Left colon (tissue), 2 donors: ENCODE measurements at regions of chr7 and their contacts with region 1.

Region 1: DNA sequence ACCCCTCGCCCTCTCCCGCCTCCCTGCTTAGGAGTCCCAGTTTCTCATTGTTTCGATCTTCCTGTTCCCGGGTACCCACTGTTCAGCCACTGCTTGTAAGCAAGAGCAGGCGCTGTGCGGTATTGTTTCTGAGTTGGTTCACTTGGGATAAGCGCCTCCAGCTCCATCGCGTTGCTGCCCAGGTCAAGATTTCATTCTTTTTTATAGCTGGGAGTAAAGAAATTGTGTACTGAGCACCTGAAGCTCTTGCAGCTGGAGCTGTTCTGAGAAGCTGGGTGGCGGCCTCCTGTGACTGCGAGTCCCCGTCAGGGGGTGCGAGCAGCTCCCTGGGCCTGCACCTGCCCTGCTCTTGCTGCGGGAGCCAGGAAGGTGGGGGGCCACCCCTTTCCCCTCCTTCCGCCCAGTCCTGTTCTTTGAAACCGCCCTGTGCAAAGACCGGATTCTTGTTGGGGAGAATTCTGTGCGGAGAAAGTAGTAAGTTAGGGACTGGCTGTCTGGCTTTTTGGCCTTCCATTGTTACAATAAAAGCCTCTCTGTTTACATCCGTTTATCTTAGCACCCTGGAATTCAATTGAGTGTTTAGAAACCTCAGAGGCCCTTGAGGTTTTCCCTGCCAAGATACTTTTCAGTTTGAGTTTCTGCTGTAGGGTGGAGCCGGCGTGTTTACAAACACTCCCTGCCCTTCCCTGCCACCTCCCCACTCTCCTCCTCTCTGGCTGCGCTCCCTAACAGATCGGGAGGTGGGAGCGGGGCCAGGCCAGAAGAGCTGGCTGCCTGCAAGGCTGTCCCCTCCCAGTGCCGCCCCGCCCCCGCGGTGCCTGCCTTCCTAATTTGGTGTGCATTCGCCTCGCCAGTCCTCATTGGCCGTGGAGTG is 30.8 kb upstream of the AP5Z1 start:
- DNase-seq: peak; percentile 98 to 100
- ATAC-seq: peak; percentile 80

Region 2: GRCh38 chr7:4319280-4319679 is 425.3 kb before region 1 on chr7:
- intact Hi-C with region 1: no loop called
- DNase-seq: no peak
- ATAC-seq: no peak

Region 3: DNA sequence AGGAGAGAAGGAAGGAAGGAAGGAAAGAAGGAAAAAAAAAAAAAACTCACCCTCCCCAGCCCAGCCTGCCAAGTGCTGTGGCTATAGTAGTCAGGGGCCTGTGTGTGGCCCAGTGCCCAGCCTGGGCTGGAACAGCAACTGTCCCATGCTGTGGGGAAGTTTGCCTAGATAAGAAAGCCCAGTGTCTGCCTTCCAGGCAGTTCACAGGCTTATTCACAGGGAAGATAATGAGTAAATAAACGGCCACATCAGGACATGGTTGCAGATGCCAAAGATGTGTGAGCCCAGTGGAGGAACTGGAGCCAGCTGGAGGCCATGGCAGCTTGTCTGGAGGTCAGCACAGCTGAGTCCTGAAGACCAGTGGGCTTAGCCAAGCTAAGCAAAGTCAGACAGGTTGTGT is 194.9 kb before region 1 on chr7:
- intact Hi-C with region 1: no loop called
- DNase-seq: no peak
- ATAC-seq: no peak

Region 4: GRCh38 chr7:4681886-4682620 is 62.6 kb before region 1 on chr7 and contains the start of gene FOXK1:
- intact Hi-C with region 1: loop called in 1 of 2 experiments (anchors 5 kb)
- DNase-seq: peak; percentile 66 to 84
- ATAC-seq: peak; percentile 73
- total RNA-seq, gene FOXK1: 19.9 to 28.3 TPM